B cell (primary cell): ENCODE measurements at regions of chr17 and their contacts with region 1.

Region 1: GRCh38 chr17:65122836-65123756 is 14.1 kb upstream of the RGS9 start:
- DNase-seq: peak; percentile 93
- ATAC-seq: peak; percentile 88
- H3K4me3 ChIP-seq: peak overlapping the region; percentile 57 to 79 (median 68)
- H3K4me3 Mint-ChIP-seq: peak overlapping the region; percentile 95
- H3K27ac ChIP-seq: peak overlapping the region; percentile 64 to 84
- H3K27ac Mint-ChIP-seq: peak overlapping the region; percentile 97
- H3K4me1 ChIP-seq: peaks cover 9 to 13% of the 10 kb centered on the region in 2 donors
- H3K4me1 Mint-ChIP-seq: peaks cover 14% of the 10 kb centered on the region
- H3K27me3 ChIP-seq: peaks cover 0 to 7% (median 0%) of the 10 kb centered on the region in 4 experiments
- H3K27me3 Mint-ChIP-seq: no peaks in the 10 kb centered on the region
- CTCF ChIP-seq: no peak

Region 2: GRCh38 chr17:64778240-64779097 is 344.6 kb before region 1 on chr17:
- CTCF ChIA-PET with region 1: no interaction called
- POLR2A ChIA-PET with region 1: no interaction called
- intact Hi-C with region 1: loop called (anchors 5 kb)
- DNase-seq: peak; percentile 61
- ATAC-seq: peak; percentile 14
- H3K4me3 ChIP-seq: peak overlapping the region; percentile 12 to 55 (median 51)
- H3K4me3 Mint-ChIP-seq: peak overlapping the region; percentile 94
- H3K27ac ChIP-seq: no peak overlapping the region
- H3K27ac Mint-ChIP-seq: peak overlapping the region; percentile 76
- H3K4me1 ChIP-seq: peaks cover 37 to 56% of the 10 kb centered on the region in 2 donors
- H3K4me1 Mint-ChIP-seq: peaks cover 45% of the 10 kb centered on the region
- H3K27me3 ChIP-seq: peaks cover 0 to 32% (median 10%) of the 10 kb centered on the region in 4 experiments
- H3K27me3 Mint-ChIP-seq: peaks cover 3% of the 10 kb centered on the region
- CTCF ChIP-seq: no peak

Region 3: DNA sequence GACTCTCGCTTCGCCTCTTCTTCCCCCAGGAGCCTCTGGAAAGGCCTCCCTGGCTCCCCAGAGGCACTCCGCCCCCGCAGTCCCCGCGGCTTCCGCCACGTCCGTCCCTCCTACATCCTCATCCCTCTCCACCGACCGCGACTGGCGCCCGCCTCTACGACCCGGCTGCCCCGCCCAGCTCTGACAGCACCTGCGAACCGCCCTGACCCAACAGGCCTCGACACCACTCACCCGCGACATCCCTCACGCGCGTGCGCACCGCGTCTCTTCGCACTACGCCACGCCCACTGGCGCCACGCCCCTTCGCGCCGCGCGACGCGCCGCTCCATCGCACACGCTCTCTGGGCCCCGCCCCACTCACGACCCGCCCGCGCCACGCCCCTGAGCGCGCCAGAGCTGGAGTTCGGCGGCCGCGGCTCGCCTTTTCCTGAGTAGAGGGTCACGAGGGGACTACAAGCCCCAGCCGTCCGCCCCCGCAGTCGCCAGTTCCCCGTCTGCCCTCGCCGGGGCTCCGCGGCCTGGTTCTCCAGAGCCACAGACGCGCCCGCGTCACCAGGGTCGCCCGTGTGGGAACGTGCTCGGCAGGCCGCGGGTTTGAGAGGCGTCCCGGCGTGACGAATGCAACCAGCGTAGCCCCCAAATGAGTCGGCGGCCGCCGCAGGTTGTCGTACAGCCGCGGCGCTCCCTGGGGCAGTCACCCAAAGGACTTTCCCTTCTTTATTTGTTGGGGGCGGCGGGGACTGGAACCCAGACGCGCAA is 147.6 kb before region 1 on chr17:
- CTCF ChIA-PET with region 1: no interaction called
- POLR2A ChIA-PET with region 1: interaction called, 8 read pairs
- intact Hi-C with region 1: loop called (anchors 5 kb)
- DNase-seq: peak; percentile 100
- ATAC-seq: peak; percentile 74
- H3K4me3 ChIP-seq: peak overlapping the region in 4 of 5 experiments; percentile 59 to 77 (median 68)
- H3K4me3 Mint-ChIP-seq: peak overlapping the region; percentile 92
- H3K27ac ChIP-seq: peak overlapping the region; percentile 95 to 99
- H3K27ac Mint-ChIP-seq: peak overlapping the region; percentile 99
- H3K4me1 ChIP-seq: peaks cover 28 to 34% of the 10 kb centered on the region in 2 donors
- H3K4me1 Mint-ChIP-seq: peaks cover 56% of the 10 kb centered on the region
- H3K27me3 ChIP-seq: no peaks in the 10 kb centered on the region
- H3K27me3 Mint-ChIP-seq: no peaks in the 10 kb centered on the region
- CTCF ChIP-seq: no peak

Region 4: GRCh38 chr17:64984851-64985521 is 138.1 kb before region 1 on chr17:
- CTCF ChIA-PET with region 1: no interaction called
- POLR2A ChIA-PET with region 1: interaction called, 6 read pairs
- intact Hi-C with region 1: loop called (anchors 5 kb)
- DNase-seq: peak; percentile 44
- ATAC-seq: no peak
- H3K4me3 ChIP-seq: peak overlapping the region in 1 of 5 experiments; percentile 50
- H3K4me3 Mint-ChIP-seq: peak overlapping the region; percentile 81
- H3K27ac ChIP-seq: peak overlapping the region; percentile 99 to 100
- H3K27ac Mint-ChIP-seq: peak overlapping the region; percentile 99
- H3K4me1 ChIP-seq: peaks cover 33 to 49% of the 10 kb centered on the region in 2 donors
- H3K4me1 Mint-ChIP-seq: peaks cover 51% of the 10 kb centered on the region
- H3K27me3 ChIP-seq: no peaks in the 10 kb centered on the region
- H3K27me3 Mint-ChIP-seq: no peaks in the 10 kb centered on the region
- CTCF ChIP-seq: no peak

Region 5: GRCh38 chr17:65013613-65014391 is 109.3 kb before region 1 on chr17:
- CTCF ChIA-PET with region 1: no interaction called
- POLR2A ChIA-PET with region 1: no interaction called
- intact Hi-C with region 1: no loop called
- DNase-seq: no peak
- ATAC-seq: no peak
- H3K4me3 ChIP-seq: no peak overlapping the region
- H3K4me3 Mint-ChIP-seq: no peak overlapping the region
- H3K27ac ChIP-seq: peak overlapping the region in 1 of 2 donors; percentile 20
- H3K27ac Mint-ChIP-seq: peak overlapping the region; percentile 43
- H3K4me1 ChIP-seq: peaks cover 9 to 35% of the 10 kb centered on the region in 2 donors
- H3K4me1 Mint-ChIP-seq: peaks cover 77% of the 10 kb centered on the region
- H3K27me3 ChIP-seq: no peaks in the 10 kb centered on the region
- H3K27me3 Mint-ChIP-seq: no peaks in the 10 kb centered on the region
- CTCF ChIP-seq: no peak

Region 6: GRCh38 chr17:65137021-65137991 is 14.2 kb after region 1 on chr17 and contains the start of gene RGS9:
- CTCF ChIA-PET with region 1: interaction called, 20 read pairs
- POLR2A ChIA-PET with region 1: interaction called, 5 read pairs
- intact Hi-C with region 1: loop called (anchors 1 kb)
- DNase-seq: peak; percentile 89
- ATAC-seq: peak; percentile 98
- H3K4me3 ChIP-seq: peak within 1 kb of the TSS in 4 of 5 experiments; percentile 32 to 55 (median 49)
- H3K4me3 Mint-ChIP-seq: peak within 1 kb of the TSS; percentile 86
- H3K27ac ChIP-seq: no peak within 1 kb of the TSS
- H3K27ac Mint-ChIP-seq: peak within 1 kb of the TSS; percentile 32
- H3K4me1 ChIP-seq: peaks cover 11 to 13% of the 10 kb centered on the region in 2 donors
- H3K4me1 Mint-ChIP-seq: peaks cover 18% of the 10 kb centered on the region
- H3K27me3 ChIP-seq: peaks cover 0 to 13% (median 8%) of the 10 kb centered on the region in 4 experiments
- H3K27me3 Mint-ChIP-seq: peaks cover 18% of the 10 kb centered on the region
- CTCF ChIP-seq: peak; percentile 85
- total RNA-seq, gene RGS9: 3.4 and 4.4 TPM in 2 replicates

Region 7: DNA sequence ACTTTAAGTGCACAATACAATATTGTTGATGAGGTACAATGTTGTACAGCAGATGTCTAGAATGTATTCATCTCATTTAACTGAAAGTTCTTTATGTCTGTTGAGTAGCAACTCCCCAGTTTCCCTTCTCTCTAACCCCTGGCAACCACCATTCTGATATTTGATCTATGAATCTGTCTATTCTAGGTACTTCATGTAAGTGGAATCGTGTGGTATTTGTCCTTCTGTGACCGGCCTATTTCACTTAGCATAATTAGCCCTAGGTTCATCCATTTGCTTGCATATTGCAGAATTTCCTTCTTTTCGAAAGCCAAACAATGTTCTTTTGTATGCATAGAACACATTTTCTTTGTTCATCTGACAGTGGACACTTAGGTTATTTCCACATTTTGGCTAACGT is 24.9 kb after region 1 on chr17:
- CTCF ChIA-PET with region 1: no interaction called
- POLR2A ChIA-PET with region 1: no interaction called
- intact Hi-C with region 1: no loop called
- DNase-seq: no peak
- ATAC-seq: no peak
- H3K4me3 ChIP-seq: no peak overlapping the region
- H3K4me3 Mint-ChIP-seq: no peak overlapping the region
- H3K27ac ChIP-seq: no peak overlapping the region
- H3K27ac Mint-ChIP-seq: no peak overlapping the region
- H3K4me1 ChIP-seq: no peaks in the 10 kb centered on the region
- H3K4me1 Mint-ChIP-seq: no peaks in the 10 kb centered on the region
- H3K27me3 ChIP-seq: peaks cover 0 to 2% (median 0%) of the 10 kb centered on the region in 4 experiments
- H3K27me3 Mint-ChIP-seq: peaks cover 3% of the 10 kb centered on the region
- CTCF ChIP-seq: no peak

Region 8: GRCh38 chr17:65198653-65199382 is 75.7 kb after region 1 on chr17:
- CTCF ChIA-PET with region 1: no interaction called
- POLR2A ChIA-PET with region 1: no interaction called
- intact Hi-C with region 1: loop called (anchors 5 kb)
- DNase-seq: peak; percentile 73
- ATAC-seq: peak; percentile 53
- H3K4me3 ChIP-seq: no peak overlapping the region
- H3K4me3 Mint-ChIP-seq: no peak overlapping the region
- H3K27ac ChIP-seq: no peak overlapping the region
- H3K27ac Mint-ChIP-seq: no peak overlapping the region
- H3K4me1 ChIP-seq: no peaks in the 10 kb centered on the region
- H3K4me1 Mint-ChIP-seq: peaks cover 2% of the 10 kb centered on the region
- H3K27me3 ChIP-seq: no peaks in the 10 kb centered on the region
- H3K27me3 Mint-ChIP-seq: no peaks in the 10 kb centered on the region
- CTCF ChIP-seq: peak; percentile 89

Region 9: DNA sequence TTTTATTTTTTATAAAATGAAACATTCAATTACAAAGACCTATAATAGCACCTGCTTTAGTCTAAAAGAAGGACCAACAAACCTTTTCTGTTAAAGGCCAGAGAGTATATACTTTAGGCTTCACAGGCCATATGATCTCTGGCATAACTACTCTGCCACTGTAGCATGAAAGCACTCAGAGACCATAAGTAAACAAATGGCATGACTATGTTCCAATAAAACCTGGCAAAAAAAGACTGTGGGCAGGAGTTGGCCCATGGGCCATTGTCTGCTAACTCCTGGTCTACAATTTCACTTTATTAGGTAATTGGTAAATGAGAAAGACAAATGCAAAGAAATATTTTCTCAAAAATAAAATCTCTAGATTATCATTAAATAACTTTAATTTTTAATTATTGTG is 1054.0 kb after region 1 on chr17:
- CTCF ChIA-PET with region 1: no interaction called
- POLR2A ChIA-PET with region 1: no interaction called
- intact Hi-C with region 1: no loop called
- DNase-seq: no peak
- ATAC-seq: no peak
- H3K4me3 ChIP-seq: no peak overlapping the region
- H3K4me3 Mint-ChIP-seq: no peak overlapping the region
- H3K27ac ChIP-seq: no peak overlapping the region
- H3K27ac Mint-ChIP-seq: no peak overlapping the region
- H3K4me1 ChIP-seq: no peaks in the 10 kb centered on the region
- H3K4me1 Mint-ChIP-seq: no peaks in the 10 kb centered on the region
- H3K27me3 ChIP-seq: no peaks in the 10 kb centered on the region
- H3K27me3 Mint-ChIP-seq: no peaks in the 10 kb centered on the region
- CTCF ChIP-seq: no peak